Ascending aorta (tissue), 2 donors: ENCODE measurements at regions of chr3 and their contacts with region 1.

Region 1: DNA sequence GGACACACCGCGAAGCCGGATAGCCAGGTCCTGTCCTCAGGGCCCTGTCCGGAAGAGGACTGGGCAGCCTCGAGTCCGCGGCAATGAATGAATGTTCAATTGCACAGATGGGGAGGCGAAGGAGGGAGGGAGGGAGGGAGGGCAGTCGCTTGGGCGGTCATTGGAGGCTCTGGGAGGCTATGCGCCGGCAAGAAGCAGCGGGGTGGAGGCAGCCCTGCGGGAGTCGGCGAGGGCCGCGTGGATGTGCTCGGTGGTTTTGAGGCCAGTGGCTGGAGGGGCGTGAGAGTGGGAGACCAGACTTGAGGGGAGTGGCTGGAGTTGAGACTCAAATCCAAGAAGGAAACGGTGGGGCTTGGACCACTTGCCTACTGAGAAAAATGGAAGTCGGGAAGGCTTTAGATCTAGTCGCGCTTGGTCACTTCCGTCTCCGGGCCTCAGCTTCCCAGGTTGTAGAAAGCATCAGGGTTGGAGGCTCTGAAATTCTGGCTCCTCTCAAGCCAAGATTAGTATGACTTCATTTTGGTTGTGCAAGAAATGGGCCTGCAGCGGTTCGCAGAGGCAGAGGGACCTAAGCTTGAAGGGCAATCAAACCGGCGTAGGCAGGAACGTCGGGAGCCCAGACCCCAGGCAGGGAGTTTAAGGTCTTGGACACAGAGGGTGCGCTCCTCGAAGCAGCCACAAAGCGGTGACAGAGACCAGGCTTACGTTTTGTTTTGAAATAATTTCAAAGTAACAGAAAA is 21.1 kb upstream of the PLXND1 start:
- DNase-seq: peak in 1 of 2 donors; percentile 89
- H3K4me3 ChIP-seq: peak overlapping the region; percentile 71 to 75
- H3K27ac ChIP-seq: peak overlapping the region; percentile 99 to 100
- H3K4me1 ChIP-seq: peaks cover 3 to 42% of the 10 kb centered on the region in 2 donors
- H3K27me3 ChIP-seq: no peaks in the 10 kb centered on the region
- CTCF ChIP-seq: peak; percentile 59 to 83 (median 78)

Region 2: GRCh38 chr3:129439817-129440617 is 187.6 kb before region 1 on chr3 and contains the starts of genes IFT122 and MBD4:
- intact Hi-C with region 1: loop called (anchors 2 kb)
- DNase-seq: peak; percentile 94 to 99
- H3K4me3 ChIP-seq: peak within 1 kb of the TSS; percentile 84 to 96
- H3K27ac ChIP-seq: peak within 1 kb of the TSS; percentile 84 to 85
- H3K4me1 ChIP-seq: peaks cover 16 to 36% of the 10 kb centered on the region in 2 donors
- H3K27me3 ChIP-seq: no peaks in the 10 kb centered on the region
- CTCF ChIP-seq: no peak
- total RNA-seq, gene IFT122: 51.1 TPM
- total RNA-seq, gene MBD4: 57.6 TPM

Region 3: DNA sequence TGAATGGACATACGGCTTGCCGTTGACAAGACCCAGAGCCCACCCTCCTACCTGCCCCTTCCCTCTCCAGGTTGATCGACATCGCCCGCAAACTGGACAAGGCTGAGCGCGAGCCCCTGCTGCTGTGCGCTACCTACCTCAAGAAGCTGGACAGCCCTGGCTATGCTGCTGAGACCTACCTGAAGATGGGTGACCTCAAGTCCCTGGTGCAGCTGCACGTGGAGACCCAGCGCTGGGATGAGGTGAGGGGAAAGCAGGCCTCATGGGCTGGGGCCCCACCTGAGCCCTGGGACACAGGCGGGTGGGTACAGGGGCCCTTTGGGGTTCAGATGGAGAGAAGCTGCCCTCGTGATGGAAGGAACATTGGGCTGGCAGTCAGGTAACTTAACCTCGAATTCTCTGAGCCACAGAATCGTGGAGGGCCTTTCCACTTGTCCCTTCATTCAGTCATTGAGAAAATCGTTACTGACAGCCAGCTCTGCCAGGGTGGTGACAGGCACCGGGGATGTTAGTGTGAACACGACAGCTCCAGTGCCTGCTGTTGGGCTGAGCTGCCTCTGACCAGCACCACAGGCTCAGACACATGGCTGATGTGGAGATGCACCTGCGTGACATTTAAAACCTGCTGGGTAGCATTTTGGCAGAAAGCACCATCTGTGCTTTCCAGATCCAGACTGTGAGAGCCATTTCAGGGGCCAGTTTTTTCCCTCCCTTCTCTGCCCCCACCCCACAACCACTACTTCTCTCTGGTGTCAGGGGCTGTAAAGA is 124.8 kb before region 1 on chr3:
- intact Hi-C with region 1: no loop called
- DNase-seq: no peak
- H3K4me3 ChIP-seq: no peak overlapping the region
- H3K27ac ChIP-seq: no peak overlapping the region
- H3K4me1 ChIP-seq: peaks cover 0 to 18% of the 10 kb centered on the region in 2 donors
- H3K27me3 ChIP-seq: no peaks in the 10 kb centered on the region
- CTCF ChIP-seq: no peak

Region 4: GRCh38 chr3:129536356-129536665 is 91.3 kb before region 1 on chr3:
- intact Hi-C with region 1: no loop called
- DNase-seq: no peak
- H3K4me3 ChIP-seq: no peak overlapping the region
- H3K27ac ChIP-seq: no peak overlapping the region
- H3K4me1 ChIP-seq: no peaks in the 10 kb centered on the region
- H3K27me3 ChIP-seq: no peaks in the 10 kb centered on the region
- CTCF ChIP-seq: no peak

Region 5: DNA sequence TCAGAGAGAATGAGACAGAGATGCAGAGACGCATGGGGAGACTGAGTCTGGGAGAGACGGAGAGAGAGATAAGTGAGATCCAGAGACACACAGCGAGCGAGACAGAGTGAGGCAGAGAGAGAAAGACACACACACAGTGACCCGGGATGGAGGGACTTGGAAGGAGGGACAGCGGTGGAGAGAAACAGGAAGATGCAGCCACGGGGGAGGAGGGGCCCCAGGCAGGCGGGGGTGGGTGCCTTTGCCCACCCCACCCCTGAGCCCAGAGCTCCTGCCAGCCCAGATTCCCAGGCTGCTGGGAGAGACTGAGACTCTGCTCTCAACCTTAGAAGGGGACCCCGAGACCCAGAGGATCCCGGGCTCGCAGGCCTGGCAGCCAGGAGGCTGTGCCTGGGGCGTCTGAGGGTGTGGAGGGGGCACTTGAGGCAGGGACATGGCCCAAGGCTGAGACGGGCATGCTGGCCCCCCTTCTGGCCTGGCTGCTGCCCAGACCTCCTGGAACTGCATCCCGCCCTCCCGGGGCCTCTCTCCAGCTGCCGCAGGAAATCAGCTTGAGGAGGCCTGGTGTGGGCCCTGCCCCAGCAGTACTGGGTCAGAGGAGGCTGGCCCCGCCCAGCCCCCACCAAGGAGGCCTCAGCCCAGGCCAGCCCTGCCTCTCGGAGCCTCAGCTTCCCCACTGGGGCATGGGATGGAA is 66.6 kb before region 1 on chr3:
- intact Hi-C with region 1: loop called (anchors 1 kb)
- DNase-seq: peak; percentile 69 to 93
- H3K4me3 ChIP-seq: peak overlapping the region; percentile 6 to 57
- H3K27ac ChIP-seq: peak overlapping the region; percentile 91 to 93
- H3K4me1 ChIP-seq: peaks cover 29 to 64% of the 10 kb centered on the region in 2 donors
- H3K27me3 ChIP-seq: no peaks in the 10 kb centered on the region
- CTCF ChIP-seq: no peak

Region 6: DNA sequence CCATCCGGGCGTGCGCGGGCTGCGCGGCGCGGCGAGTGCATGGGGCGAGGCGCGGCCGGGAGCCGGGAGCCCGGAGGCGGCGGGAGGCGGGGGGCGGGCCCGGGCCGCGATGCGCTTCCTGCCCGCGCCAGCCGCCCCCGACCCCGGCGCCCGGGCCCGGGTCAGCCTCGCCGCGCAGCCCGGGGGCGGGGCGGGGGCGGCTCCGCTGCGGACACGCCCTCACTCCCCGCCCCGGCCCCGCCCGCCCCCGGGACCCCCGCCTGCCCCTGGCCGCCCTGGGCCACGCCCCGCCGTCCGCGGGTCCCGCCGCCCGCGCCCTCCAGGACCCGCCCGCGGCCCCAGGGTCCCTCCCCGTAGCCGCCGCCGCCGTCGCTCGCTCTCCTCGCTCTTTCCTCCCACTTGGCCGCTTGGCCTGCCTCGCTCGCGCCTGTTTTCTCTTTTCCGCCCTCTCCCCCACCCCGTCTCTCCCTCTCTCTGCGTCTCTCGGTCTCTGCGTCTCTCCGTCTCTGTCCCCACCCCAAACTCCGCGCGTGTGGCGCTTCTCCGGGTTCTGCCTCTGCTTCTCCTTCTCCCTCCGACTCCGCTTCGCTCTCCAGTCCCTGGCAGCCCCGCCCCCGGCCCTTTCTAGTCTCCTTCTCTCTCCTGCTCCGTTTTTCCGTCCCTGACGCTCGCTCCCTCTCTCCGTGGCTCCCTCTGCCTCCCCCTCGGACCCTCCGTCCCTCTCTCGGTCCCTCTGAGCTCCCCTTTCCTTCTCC is 20.8 kb before region 1 on chr3 and contains the start of gene PLXND1:
- intact Hi-C with region 1: loop called (anchors 1 kb)
- DNase-seq: peak in 1 of 2 donors; percentile 87
- H3K4me3 ChIP-seq: peak within 1 kb of the TSS; percentile 84 to 90
- H3K27ac ChIP-seq: peak within 1 kb of the TSS; percentile 94
- H3K4me1 ChIP-seq: peaks cover 28 to 62% of the 10 kb centered on the region in 2 donors
- H3K27me3 ChIP-seq: no peaks in the 10 kb centered on the region
- CTCF ChIP-seq: no peak
- total RNA-seq, gene PLXND1: 407 TPM

Region 7: DNA sequence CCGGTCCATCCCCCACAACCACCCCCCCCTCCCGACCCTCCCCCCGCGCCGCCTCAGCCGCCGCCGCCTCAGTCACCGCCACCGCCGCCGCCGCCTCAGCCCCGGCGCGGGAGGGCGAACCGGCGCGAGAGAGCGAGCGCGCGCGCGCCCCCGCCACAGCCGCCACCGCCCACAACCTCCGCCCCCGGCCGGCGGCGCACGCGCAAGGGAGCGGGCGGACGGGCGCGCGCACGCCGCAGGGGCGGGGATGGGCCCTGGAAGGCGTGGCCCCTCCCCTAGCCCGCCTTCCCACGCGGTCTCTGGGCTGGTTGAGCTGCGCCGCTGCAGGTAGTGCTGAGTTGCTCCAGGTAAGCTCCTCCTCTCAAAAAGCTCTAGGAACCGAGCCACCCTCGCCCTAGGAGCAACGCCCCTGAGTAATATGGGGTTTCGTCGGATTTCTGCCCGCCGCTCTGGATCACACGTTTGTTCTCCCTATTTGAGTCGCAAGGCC is 266.0 kb after region 1 on chr3 and contains the start of gene TMCC1:
- intact Hi-C with region 1: loop called (anchors 1 kb)
- DNase-seq: peak; percentile 22 to 87
- H3K4me3 ChIP-seq: peak within 1 kb of the TSS; percentile 66 to 94
- H3K27ac ChIP-seq: peak within 1 kb of the TSS; percentile 83 to 94
- H3K4me1 ChIP-seq: peaks cover 4 to 7% of the 10 kb centered on the region in 2 donors
- H3K27me3 ChIP-seq: no peaks in the 10 kb centered on the region
- CTCF ChIP-seq: no peak
- total RNA-seq, gene TMCC1: 11.5 TPM